HCT116 (cell line): ENCODE measurements at regions of chr14 and their contacts with region 1.

Region 1: GRCh38 chr14:76274324-76274723 is 101.6 kb upstream of the ESRRB start:
- DNase-seq: no peak
- ATAC-seq: no peak
- H3K4me3 ChIP-seq: no peak overlapping the region
- H3K27ac ChIP-seq: no peak overlapping the region
- H3K4me1 ChIP-seq: no peaks in the 10 kb centered on the region
- H3K27me3 ChIP-seq: peaks cover 13% of the 10 kb centered on the region; the same call in 1 of the 2 replicates
- CTCF ChIP-seq: no peak
- POLR2A ChIP-seq: no peak
- RAD21 ChIP-seq: no peak

Region 2: GRCh38 chr14:76227448-76228050 is 46.8 kb before region 1 on chr14:
- CTCF ChIA-PET with region 1: no interaction called
- POLR2A ChIA-PET with region 1: no interaction called
- RAD21 ChIA-PET with region 1: no interaction called
- intact Hi-C with region 1: loop called (anchors 1 kb)
- DNase-seq: no peak
- ATAC-seq: no peak
- H3K4me3 ChIP-seq: no peak overlapping the region
- H3K27ac ChIP-seq: no peak overlapping the region
- H3K4me1 ChIP-seq: no peaks in the 10 kb centered on the region
- H3K27me3 ChIP-seq: no peaks in the 10 kb centered on the region
- CTCF ChIP-seq: no peak
- POLR2A ChIP-seq: no peak
- RAD21 ChIP-seq: no peak